Caco-2 (cell line): ENCODE measurements at regions of chr16 and their contacts with region 1.

Region 1: GRCh38 chr16:76577003-76577402 is 299.8 kb downstream of the CNTNAP4 start:
- DNase-seq: no peak
- H3K4me3 ChIP-seq: no peak overlapping the region
- H3K4me3 Mint-ChIP-seq: no peak overlapping the region
- H3K27ac Mint-ChIP-seq: peak overlapping the region; percentile 79
- H3K4me1 ChIP-seq: peaks cover 44% of the 10 kb centered on the region
- H3K4me1 Mint-ChIP-seq: peaks cover 26% of the 10 kb centered on the region
- H3K27me3 ChIP-seq: no peaks in the 10 kb centered on the region
- H3K27me3 Mint-ChIP-seq: no peaks in the 10 kb centered on the region
- CTCF ChIP-seq: no peak

Region 2: DNA sequence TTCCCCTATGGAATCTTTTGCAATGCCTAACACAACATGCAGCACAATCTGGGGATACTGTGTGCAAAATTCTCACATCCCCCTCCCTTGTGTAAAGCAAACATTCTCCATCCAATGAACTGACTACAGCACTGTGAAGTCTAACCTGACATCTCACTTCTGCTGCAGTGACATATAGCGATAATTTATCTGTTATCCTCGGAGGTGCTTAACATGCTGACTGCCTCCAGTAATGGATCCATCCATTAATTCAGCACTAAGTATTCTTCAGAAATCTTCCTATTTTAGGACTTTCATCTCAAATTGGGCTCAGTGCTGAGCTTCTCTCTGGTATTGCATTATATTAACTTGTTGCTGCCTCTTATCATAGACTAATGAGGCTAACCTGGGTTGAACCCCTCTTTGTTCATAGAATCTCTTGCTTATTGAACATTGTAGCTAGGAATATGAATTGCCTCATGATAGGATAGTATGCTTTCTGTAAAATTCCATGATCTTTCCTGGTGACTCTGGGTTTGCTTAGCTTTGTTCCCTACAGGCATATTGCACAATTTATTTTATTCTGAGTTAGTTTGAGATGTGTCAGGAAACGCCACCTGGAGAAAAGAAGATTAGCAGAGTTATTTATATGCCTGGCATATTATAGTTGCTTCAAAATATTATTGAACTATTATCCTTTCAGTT is 111.9 kb before region 1 on chr16:
- CTCF ChIA-PET with region 1: no interaction called
- POLR2A ChIA-PET with region 1: no interaction called
- intact Hi-C with region 1: no loop called
- DNase-seq: no peak
- H3K4me3 ChIP-seq: no peak overlapping the region
- H3K4me3 Mint-ChIP-seq: no peak overlapping the region
- H3K27ac Mint-ChIP-seq: no peak overlapping the region
- H3K4me1 ChIP-seq: no peaks in the 10 kb centered on the region; the same call in 1 of the 2 replicates
- H3K4me1 Mint-ChIP-seq: no peaks in the 10 kb centered on the region
- H3K27me3 ChIP-seq: no peaks in the 10 kb centered on the region
- H3K27me3 Mint-ChIP-seq: no peaks in the 10 kb centered on the region
- CTCF ChIP-seq: no peak

Region 3: DNA sequence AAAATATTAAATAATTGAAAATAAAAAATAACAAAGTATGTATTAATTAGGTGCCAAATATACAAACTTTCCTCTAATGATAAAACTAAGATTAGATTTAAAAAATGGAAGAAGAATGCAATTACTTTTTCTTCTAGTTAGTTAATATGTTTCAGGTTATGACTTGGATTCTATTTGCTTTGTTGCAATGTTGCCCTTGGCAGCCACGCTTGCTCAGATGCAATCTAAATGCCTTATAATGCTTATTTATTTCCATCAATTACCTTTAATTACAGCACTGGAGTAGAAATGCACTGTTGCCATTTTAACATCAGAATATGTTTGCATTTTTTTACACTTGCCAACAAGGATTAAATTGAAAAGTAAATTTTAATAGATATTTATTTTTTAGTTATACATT is 35.9 kb before region 1 on chr16:
- CTCF ChIA-PET with region 1: no interaction called
- POLR2A ChIA-PET with region 1: no interaction called
- intact Hi-C with region 1: loop called (anchors 1 kb)
- DNase-seq: no peak
- H3K4me3 ChIP-seq: no peak overlapping the region
- H3K4me3 Mint-ChIP-seq: no peak overlapping the region
- H3K27ac Mint-ChIP-seq: no peak overlapping the region
- H3K4me1 ChIP-seq: peaks cover 24% of the 10 kb centered on the region
- H3K4me1 Mint-ChIP-seq: no peaks in the 10 kb centered on the region
- H3K27me3 ChIP-seq: no peaks in the 10 kb centered on the region
- H3K27me3 Mint-ChIP-seq: no peaks in the 10 kb centered on the region
- CTCF ChIP-seq: no peak

Region 4: DNA sequence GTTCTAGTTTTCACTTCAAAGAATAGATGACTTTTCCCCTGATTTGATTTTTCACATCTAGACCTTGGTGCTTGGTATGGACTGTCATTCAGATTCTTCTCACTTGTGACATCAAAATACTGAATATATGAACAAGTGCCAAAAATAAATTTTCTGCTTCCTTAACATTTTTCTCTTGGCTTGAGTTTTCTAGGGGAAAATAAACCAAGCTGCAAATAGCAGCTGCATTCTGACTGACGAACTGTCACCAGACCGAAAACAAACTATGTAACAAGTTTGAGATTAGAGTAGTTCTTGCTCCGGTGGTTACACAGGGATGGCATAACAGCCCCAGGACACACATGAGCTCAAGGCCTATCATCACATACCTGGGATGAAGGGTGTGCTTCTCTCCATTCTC is 45.9 kb after region 1 on chr16:
- CTCF ChIA-PET with region 1: no interaction called
- POLR2A ChIA-PET with region 1: no interaction called
- intact Hi-C with region 1: loop called (anchors 10 kb)
- DNase-seq: no peak
- H3K4me3 ChIP-seq: no peak overlapping the region
- H3K4me3 Mint-ChIP-seq: no peak overlapping the region
- H3K27ac Mint-ChIP-seq: no peak overlapping the region
- H3K4me1 ChIP-seq: peaks cover 5% of the 10 kb centered on the region
- H3K4me1 Mint-ChIP-seq: no peaks in the 10 kb centered on the region
- H3K27me3 ChIP-seq: no peaks in the 10 kb centered on the region
- H3K27me3 Mint-ChIP-seq: no peaks in the 10 kb centered on the region
- CTCF ChIP-seq: no peak

Region 5: DNA sequence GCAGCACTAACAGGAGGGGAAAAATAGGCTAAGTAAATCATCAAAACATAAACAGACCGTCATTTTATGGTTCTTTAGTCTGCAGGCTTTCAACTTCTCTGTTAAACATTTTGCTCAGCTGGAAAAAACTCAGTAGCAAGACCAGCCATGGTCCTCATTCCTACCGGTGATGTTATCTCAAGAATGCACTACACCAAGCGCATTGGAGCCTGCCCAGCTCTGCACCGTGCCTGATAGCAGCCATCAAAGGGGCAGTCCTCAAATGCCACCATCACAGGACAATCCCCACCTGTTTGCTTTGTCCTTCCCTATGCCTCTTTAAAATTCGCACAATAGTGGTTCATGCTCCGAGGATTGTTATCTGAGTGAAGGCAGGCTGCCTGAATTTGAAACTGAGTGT is 432.4 kb after region 1 on chr16:
- CTCF ChIA-PET with region 1: no interaction called
- POLR2A ChIA-PET with region 1: no interaction called
- intact Hi-C with region 1: no loop called
- DNase-seq: no peak
- H3K4me3 ChIP-seq: no peak overlapping the region
- H3K4me3 Mint-ChIP-seq: no peak overlapping the region
- H3K27ac Mint-ChIP-seq: no peak overlapping the region
- H3K4me1 ChIP-seq: no peaks in the 10 kb centered on the region
- H3K4me1 Mint-ChIP-seq: no peaks in the 10 kb centered on the region
- H3K27me3 ChIP-seq: no peaks in the 10 kb centered on the region
- H3K27me3 Mint-ChIP-seq: peaks cover 2% of the 10 kb centered on the region
- CTCF ChIP-seq: no peak